Vagina (tissue), 2 donors: ENCODE measurements at regions of chr14 and their contacts with region 1.

Region 1: DNA sequence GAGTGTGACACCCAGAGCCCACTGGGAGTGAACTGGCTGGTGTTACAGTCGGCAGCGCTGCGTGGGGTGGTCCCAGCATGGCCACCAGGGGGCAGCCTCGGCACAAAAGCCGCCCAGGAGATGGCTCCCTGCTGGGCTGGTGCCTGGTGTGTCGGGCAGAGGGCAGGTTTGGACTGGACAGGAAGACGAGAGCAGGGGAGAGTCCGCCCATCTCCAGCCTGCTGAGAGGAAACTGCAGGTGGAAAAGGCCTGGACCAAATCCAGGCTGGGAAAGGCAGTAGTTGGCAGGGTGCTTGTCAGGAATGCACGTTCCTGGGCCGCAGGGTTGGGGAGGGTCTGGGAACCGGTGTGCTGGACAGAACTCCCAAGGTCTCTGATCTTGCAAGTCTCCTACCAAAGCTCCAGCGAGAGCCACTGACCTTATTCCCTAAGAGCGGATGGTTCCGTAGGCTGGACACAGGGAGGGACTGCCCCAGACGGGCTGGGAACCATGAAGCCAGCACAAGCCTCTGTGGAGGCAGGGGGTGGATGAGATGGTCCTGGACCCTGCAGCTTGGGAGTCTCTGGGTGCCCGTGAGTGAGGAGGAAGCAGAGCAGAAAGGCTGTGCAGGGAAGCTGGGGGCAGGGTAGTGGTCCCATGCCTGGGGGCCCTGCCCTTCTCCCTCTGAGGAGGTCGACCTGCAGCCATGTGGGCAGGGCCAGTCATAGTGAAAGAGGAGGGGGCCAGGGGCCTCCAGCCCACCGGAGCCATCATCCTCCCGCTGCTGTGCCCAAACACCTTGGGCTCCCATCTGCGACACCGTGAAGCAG is 1.8 kb downstream of the AHNAK2 start:
- DNase-seq: no peak
- H3K4me3 ChIP-seq: peak overlapping the region in 1 of 2 donors; percentile 48
- H3K27ac ChIP-seq: peak overlapping the region; percentile 99
- H3K4me1 ChIP-seq: peaks cover 71% of the 10 kb centered on the region
- H3K27me3 ChIP-seq: no peaks in the 10 kb centered on the region
- CTCF ChIP-seq: peak; percentile 79 to 91 (median 83)
- POLR2A ChIP-seq: no peak

Region 2: GRCh38 chr14:105020815-105021655 is 44.6 kb after region 1 on chr14 and contains the start of gene CDCA4:
- intact Hi-C with region 1: loop called (anchors 5 kb)
- DNase-seq: peak in 1 of 2 donors; percentile 93
- H3K4me3 ChIP-seq: peak within 1 kb of the TSS; percentile 63 to 78
- H3K27ac ChIP-seq: peak within 1 kb of the TSS; percentile 90
- H3K4me1 ChIP-seq: peaks cover 49% of the 10 kb centered on the region
- H3K27me3 ChIP-seq: no peaks in the 10 kb centered on the region
- CTCF ChIP-seq: peak in 1 of 3 experiments; percentile 10
- POLR2A ChIP-seq: peak in 1 of 2 donors; percentile 85
- total RNA-seq, gene CDCA4: 15.2 TPM

Region 3: DNA sequence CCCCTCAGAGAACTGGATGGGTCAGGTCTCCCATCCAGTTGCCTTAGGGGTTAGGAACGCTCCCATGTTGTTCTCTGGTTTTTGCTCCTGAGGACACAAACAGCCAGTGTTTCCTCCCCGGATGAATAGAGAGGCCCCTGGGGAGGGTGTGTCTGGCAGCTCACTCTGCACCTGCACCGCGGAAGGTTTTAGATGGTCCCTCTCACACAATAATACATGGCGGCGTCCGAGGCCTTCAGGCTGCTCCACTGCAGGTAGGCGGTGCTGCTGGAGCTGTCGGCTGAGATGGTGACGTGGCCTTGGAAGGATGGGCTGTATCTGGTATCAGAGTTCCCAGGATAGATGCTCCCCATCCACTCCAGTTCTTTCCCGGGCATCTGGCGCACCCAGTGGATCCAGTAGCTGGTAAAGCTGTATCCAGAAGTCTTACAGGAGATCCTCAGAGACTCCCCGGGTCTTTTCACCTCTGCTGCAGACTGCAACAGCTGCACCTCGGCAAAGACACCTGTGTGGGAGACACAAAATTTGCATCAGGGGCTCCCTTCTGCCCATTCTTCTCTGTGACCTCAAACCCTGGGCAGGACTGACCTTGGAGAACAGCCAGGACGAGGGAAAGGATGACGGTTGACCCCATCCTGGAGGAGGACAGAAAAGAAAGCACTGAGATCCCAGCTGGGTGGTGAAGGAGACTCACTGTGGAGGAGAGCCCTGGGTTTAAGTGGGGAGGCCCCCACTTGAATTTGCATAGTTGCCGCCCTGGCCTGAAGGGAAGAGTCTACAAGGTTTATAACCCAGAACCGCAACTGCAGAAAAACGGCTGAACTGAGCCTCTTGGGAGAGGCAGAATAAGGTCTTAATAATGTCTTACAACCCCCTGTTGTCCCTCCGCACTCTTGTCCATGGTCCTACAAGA is 1874.8 kb after region 1 on chr14:
- intact Hi-C with region 1: no loop called
- DNase-seq: peak in 1 of 2 donors; percentile 60
- H3K4me3 ChIP-seq: no peak overlapping the region
- H3K27ac ChIP-seq: no peak overlapping the region
- H3K4me1 ChIP-seq: no peaks in the 10 kb centered on the region
- H3K27me3 ChIP-seq: no peaks in the 10 kb centered on the region
- CTCF ChIP-seq: no peak
- POLR2A ChIP-seq: no peak